Endothelial cell of umbilical vein (primary cell): ENCODE measurements at regions of chr13 and their contacts with region 1.

Region 1: DNA sequence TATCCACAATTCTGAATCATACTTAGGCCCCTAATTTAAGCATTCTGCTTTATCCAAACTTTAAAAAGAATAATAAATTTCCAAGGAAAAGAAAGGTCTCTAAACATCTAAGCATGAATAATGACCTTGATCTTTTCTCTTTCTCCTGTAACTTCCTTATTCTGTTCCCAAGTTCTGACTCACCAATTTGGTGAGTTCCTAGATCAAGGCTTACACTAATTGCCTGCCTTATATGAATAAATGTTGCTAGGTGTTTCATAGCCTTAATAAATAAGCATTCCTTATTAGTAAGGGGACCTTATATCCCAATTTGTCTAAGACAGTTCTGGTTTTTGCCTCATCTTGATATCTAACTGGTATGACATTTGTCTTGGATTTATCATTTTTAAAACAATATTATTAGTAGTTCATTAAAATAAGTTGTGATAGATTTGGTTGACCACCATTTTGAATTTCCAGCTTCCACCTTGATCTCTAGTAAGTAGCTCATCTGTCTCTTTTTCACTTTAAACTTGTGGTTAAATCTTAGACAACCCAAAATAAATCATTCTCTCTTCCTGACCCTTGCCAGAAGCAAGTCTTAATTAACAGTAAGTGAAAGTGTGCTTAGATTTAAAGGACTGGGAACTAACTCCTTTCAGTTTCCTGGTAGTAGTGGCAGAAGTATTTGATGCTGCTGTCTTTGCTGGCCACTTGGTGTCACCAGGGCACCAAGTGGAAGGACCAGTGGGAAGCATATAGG is 121.2 kb upstream of the MLNR start:
- DNase-seq: peak; percentile 65
- H3K4me3 ChIP-seq: peak overlapping the region in 1 of 3 experiments; percentile 12
- H3K27ac ChIP-seq: peak overlapping the region; percentile 70
- H3K4me1 ChIP-seq: peaks cover 24% of the 10 kb centered on the region
- H3K27me3 ChIP-seq: no peaks in the 10 kb centered on the region
- CTCF ChIP-seq: peak in 1 of 2 donors; percentile 42
- POLR2A ChIP-seq: no peak

Region 2: GRCh38 chr13:48892053-48892690 is 206.8 kb before region 1 on chr13:
- CTCF ChIA-PET with region 1: no interaction called
- POLR2A ChIA-PET with region 1: no interaction called
- dilution Hi-C with region 1: no loop called
- intact Hi-C with region 1: loop called (anchors 1 kb)
- DNase-seq: peak; percentile 91
- H3K4me3 ChIP-seq: no peak overlapping the region
- H3K27ac ChIP-seq: peak overlapping the region; percentile 74
- H3K4me1 ChIP-seq: peaks cover 27% of the 10 kb centered on the region
- H3K27me3 ChIP-seq: no peaks in the 10 kb centered on the region
- CTCF ChIP-seq: no peak
- POLR2A ChIP-seq: no peak

Region 3: GRCh38 chr13:48975856-48976575 is 122.9 kb before region 1 on chr13 and contains the start of gene FNDC3A:
- CTCF ChIA-PET with region 1: no interaction called
- POLR2A ChIA-PET with region 1: no interaction called
- dilution Hi-C with region 1: no loop called
- intact Hi-C with region 1: loop called (anchors 1 kb)
- DNase-seq: peak; percentile 82
- H3K4me3 ChIP-seq: peak within 1 kb of the TSS; percentile 60 to 93 (median 86)
- H3K27ac ChIP-seq: peak within 1 kb of the TSS; percentile 87
- H3K4me1 ChIP-seq: peaks cover 19% of the 10 kb centered on the region
- H3K27me3 ChIP-seq: no peaks in the 10 kb centered on the region
- CTCF ChIP-seq: peak in 1 of 2 donors; percentile 16
- POLR2A ChIP-seq: peak; percentile 23
- total RNA-seq, gene FNDC3A: 50.8 and 51.2 TPM in 2 replicates

Region 4: GRCh38 chr13:49062297-49062903 is 36.5 kb before region 1 on chr13:
- CTCF ChIA-PET with region 1: interaction called, 3 read pairs
- POLR2A ChIA-PET with region 1: no interaction called
- dilution Hi-C with region 1: no loop called
- intact Hi-C with region 1: loop called (anchors 5 kb)
- DNase-seq: peak; percentile 75
- H3K4me3 ChIP-seq: no peak overlapping the region
- H3K27ac ChIP-seq: no peak overlapping the region
- H3K4me1 ChIP-seq: peaks cover 22% of the 10 kb centered on the region
- H3K27me3 ChIP-seq: no peaks in the 10 kb centered on the region
- CTCF ChIP-seq: no peak
- POLR2A ChIP-seq: no peak

Region 5: GRCh38 chr13:49110122-49110912 is 11.4 kb after region 1 on chr13:
- CTCF ChIA-PET with region 1: interaction called, 17 read pairs
- POLR2A ChIA-PET with region 1: no interaction called
- dilution Hi-C with region 1: no loop called
- intact Hi-C with region 1: loop called (anchors 1 kb)
- DNase-seq: peak; percentile 87
- H3K4me3 ChIP-seq: peak overlapping the region; percentile 35 to 100 (median 100)
- H3K27ac ChIP-seq: peak overlapping the region; percentile 96
- H3K4me1 ChIP-seq: peaks cover 30% of the 10 kb centered on the region
- H3K27me3 ChIP-seq: no peaks in the 10 kb centered on the region
- CTCF ChIP-seq: no peak
- POLR2A ChIP-seq: peak; percentile 66